ENCODE measurements at regions of chr10 and their contacts with region 1.

Region 1: GRCh38 chr10:5623081-5623748 is 43.2 kb downstream of the ASB13 start:
- DNase-seq: peak; percentile 81
- ATAC-seq: peak; percentile 99
- H3K4me3 ChIP-seq: no peak overlapping the region
- H3K4me3 Mint-ChIP-seq: no peak overlapping the region
- H3K27ac ChIP-seq: no peak overlapping the region
- H3K27ac Mint-ChIP-seq: no peak overlapping the region
- H3K4me1 ChIP-seq: peaks cover 0 to 6% of the 10 kb centered on the region in 2 donors
- H3K4me1 Mint-ChIP-seq: peaks cover 3% of the 10 kb centered on the region
- H3K27me3 ChIP-seq: no peaks in the 10 kb centered on the region
- H3K27me3 Mint-ChIP-seq: no peaks in the 10 kb centered on the region
- CTCF ChIP-seq: peak; percentile 84

Region 2: DNA sequence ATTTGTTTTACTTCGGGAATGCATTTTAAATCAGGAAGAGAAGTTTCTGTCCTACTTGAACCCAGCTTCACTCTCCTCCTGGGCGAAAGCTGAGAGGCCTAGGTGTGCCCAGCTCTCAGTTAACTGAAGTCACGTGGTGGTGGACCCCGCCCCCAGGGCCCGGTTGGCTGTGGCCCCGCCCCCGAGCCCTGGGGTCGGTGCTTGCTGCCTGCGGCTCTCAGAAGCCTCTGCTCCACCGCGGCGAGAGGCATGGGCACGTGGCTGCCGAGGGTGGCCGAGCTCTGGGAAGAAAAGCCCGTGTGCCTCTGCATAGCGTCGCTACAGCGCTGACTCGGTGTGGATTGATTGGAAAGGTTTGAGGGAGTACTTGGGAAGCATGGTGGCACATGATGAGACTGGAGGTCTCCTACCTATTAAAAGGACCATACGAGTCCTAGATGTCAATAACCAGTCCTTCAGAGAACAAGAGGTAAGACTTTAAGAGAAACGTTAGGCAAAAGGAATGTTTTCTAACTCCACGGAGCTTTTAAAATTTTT is 176.8 kb before region 1 on chr10:
- CTCF ChIA-PET with region 1: interaction called, 659 read pairs
- POLR2A ChIA-PET with region 1: interaction called, 5 read pairs
- intact Hi-C with region 1: no loop called
- DNase-seq: peak; percentile 89
- ATAC-seq: peak; percentile 96
- H3K4me3 ChIP-seq: peak overlapping the region; percentile 45 to 76 (median 62)
- H3K4me3 Mint-ChIP-seq: peak overlapping the region; percentile 91
- H3K27ac ChIP-seq: peak overlapping the region; percentile 30 to 44
- H3K27ac Mint-ChIP-seq: peak overlapping the region; percentile 87
- H3K4me1 ChIP-seq: peaks cover 20 to 21% of the 10 kb centered on the region in 2 donors
- H3K4me1 Mint-ChIP-seq: peaks cover 47% of the 10 kb centered on the region
- H3K27me3 ChIP-seq: no peaks in the 10 kb centered on the region
- H3K27me3 Mint-ChIP-seq: no peaks in the 10 kb centered on the region
- CTCF ChIP-seq: no peak

Region 3: DNA sequence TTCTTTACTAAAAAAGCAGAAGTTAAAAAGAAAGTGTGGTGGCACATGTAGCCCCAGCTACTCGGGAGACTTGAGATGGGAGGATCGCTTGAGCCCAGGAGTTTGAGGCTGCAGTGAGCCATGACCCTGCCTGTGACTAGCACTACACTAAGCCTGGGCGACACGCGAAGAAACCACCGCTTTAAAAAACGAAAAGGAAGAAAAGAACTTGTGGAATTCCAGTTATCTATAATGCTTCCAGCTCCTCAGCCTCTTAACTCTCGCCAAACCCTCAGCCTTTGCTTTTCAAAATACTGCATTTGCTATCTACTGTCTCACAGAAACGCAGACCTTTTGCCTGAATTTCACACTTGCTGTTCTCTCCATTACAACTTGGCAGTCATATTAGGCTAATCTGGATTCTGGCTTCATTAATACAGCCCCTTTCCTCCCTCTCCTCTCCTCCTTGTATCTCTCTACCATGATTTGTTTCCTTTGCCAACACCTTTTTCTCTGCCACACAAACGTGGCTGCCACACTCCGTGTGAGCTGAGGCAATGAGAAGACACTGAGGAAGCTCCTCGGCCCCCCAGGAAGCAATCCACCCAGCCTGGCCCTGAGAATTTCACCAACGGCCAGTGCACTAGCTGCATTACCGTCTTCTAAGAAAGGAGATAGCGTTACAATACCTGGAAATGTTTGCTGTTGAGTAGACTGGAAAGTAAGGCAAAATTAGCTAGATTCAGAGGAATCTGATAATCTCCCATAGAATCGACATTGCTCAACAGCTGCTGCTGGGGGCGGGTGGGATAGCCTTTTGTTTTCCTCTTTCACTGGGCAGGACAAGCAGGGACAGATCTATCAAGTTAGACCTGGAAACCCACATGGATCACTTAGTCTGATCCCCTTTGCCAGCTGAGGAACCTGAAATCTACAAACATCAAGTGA is 161.0 kb before region 1 on chr10:
- CTCF ChIA-PET with region 1: interaction called, 10 read pairs
- POLR2A ChIA-PET with region 1: no interaction called
- intact Hi-C with region 1: no loop called
- DNase-seq: peak; percentile 18
- ATAC-seq: no peak
- H3K4me3 ChIP-seq: no peak overlapping the region
- H3K4me3 Mint-ChIP-seq: peak overlapping the region; percentile 4
- H3K27ac ChIP-seq: no peak overlapping the region
- H3K27ac Mint-ChIP-seq: no peak overlapping the region
- H3K4me1 ChIP-seq: peaks cover 7 to 9% of the 10 kb centered on the region in 2 donors
- H3K4me1 Mint-ChIP-seq: peaks cover 15% of the 10 kb centered on the region
- H3K27me3 ChIP-seq: no peaks in the 10 kb centered on the region
- H3K27me3 Mint-ChIP-seq: no peaks in the 10 kb centered on the region
- CTCF ChIP-seq: no peak

Region 4: DNA sequence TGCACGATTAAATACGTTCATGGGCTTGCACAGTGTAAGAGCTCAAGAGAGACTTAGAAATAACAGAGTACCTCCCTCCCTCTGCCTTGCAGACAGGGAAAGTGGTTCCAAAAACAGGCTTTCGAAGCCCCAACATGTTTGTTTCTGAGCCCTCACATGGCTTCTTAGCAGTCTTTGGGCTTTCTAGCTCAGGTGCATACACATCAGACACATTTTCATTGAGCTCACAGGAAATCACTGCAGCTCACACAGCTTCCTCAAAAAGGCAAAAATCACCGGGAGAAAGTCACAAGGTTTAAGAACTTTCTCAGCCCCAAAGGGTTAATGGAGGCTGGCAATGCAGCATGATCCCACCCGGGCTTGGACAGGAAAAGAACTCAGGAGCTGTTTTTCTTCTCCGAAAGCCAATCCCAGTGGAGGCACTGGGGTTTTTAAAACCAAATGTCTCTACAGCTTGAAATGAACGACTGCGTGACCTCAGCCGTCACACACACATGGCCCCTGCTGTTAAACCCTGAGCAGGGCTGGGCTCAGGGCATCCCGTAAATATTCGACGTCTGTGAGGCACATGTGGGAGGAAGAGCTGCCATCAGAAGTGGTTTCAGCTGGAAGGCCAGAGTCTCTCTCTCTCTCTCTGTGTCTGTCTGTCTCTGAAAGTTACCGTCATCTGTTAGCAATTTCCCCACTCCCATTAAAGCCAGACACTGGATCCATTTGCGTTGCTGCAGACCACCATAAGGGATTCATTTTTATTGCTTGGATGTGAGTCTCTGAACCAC is 28.8 kb before region 1 on chr10:
- CTCF ChIA-PET with region 1: interaction called, 10 read pairs
- POLR2A ChIA-PET with region 1: no interaction called
- intact Hi-C with region 1: no loop called
- DNase-seq: peak; percentile 22
- ATAC-seq: no peak
- H3K4me3 ChIP-seq: no peak overlapping the region
- H3K4me3 Mint-ChIP-seq: peak overlapping the region; percentile 13
- H3K27ac ChIP-seq: no peak overlapping the region
- H3K27ac Mint-ChIP-seq: no peak overlapping the region
- H3K4me1 ChIP-seq: peaks cover 0 to 6% of the 10 kb centered on the region in 2 donors
- H3K4me1 Mint-ChIP-seq: peaks cover 10% of the 10 kb centered on the region
- H3K27me3 ChIP-seq: peaks cover 0 to 18% (median 7%) of the 10 kb centered on the region in 4 experiments
- H3K27me3 Mint-ChIP-seq: peaks cover 64% of the 10 kb centered on the region
- CTCF ChIP-seq: no peak

Region 5: DNA sequence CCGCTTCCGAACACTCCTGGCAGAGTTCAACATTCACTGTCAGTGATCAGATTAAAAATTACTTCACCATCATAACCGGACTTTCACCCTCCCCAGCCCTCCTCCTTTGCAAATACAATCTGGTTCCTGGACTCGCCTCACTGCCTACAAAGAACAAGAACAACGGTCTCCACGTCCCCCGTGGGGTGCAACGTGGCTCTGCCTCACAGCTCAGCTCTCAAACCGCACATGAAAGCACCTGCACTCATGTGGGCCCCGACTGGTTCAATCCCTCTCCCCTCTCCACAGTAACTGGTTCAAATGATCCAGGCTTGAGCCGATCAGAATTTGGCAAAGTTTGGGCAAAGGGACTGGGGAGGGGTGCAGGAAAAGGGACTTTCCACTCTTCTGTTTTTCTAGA is 22.2 kb after region 1 on chr10:
- CTCF ChIA-PET with region 1: interaction called, 15 read pairs
- POLR2A ChIA-PET with region 1: no interaction called
- intact Hi-C with region 1: no loop called
- DNase-seq: peak; percentile 77
- ATAC-seq: peak; percentile 87
- H3K4me3 ChIP-seq: peak overlapping the region in 2 of 5 experiments; percentile 12 to 50
- H3K4me3 Mint-ChIP-seq: peak overlapping the region; percentile 58
- H3K27ac ChIP-seq: peak overlapping the region in 1 of 2 donors; percentile 74
- H3K27ac Mint-ChIP-seq: peak overlapping the region; percentile 64
- H3K4me1 ChIP-seq: peaks cover 21 to 23% of the 10 kb centered on the region in 2 donors
- H3K4me1 Mint-ChIP-seq: peaks cover 28% of the 10 kb centered on the region
- H3K27me3 ChIP-seq: no peaks in the 10 kb centered on the region
- H3K27me3 Mint-ChIP-seq: no peaks in the 10 kb centered on the region
- CTCF ChIP-seq: no peak

Region 6: GRCh38 chr10:5658871-5659618 is 35.8 kb after region 1 on chr10:
- CTCF ChIA-PET with region 1: no interaction called
- POLR2A ChIA-PET with region 1: no interaction called
- intact Hi-C with region 1: no loop called
- DNase-seq: no peak
- ATAC-seq: no peak
- H3K4me3 ChIP-seq: no peak overlapping the region
- H3K4me3 Mint-ChIP-seq: no peak overlapping the region
- H3K27ac ChIP-seq: no peak overlapping the region
- H3K27ac Mint-ChIP-seq: no peak overlapping the region
- H3K4me1 ChIP-seq: peaks cover 9 to 10% of the 10 kb centered on the region in 2 donors
- H3K4me1 Mint-ChIP-seq: peaks cover 45% of the 10 kb centered on the region
- H3K27me3 ChIP-seq: no peaks in the 10 kb centered on the region
- H3K27me3 Mint-ChIP-seq: peaks cover 8% of the 10 kb centered on the region
- CTCF ChIP-seq: no peak